Activated T-helper 2 cell treated with anti-CD3 and anti-CD28 coated beads, Interferon-gamma antibody, Interleukin-2, Interleukin-4, amounts not matched to agents 10 μg/mL and 5 μg/mL and 100 μg/mL, durations not matched to agents 14 hours and 24 hours and 36 hours (primary cell): ENCODE measurements at regions of chr15 and their contacts with region 1.

Region 1: GRCh38 chr15:84658080-84658787 is at the start of gene NMB:
- DNase-seq: peak; percentile 75
- H3K4me3 Mint-ChIP-seq: peak within 1 kb of the TSS; percentile 75
- H3K27ac Mint-ChIP-seq: peak within 1 kb of the TSS; percentile 73
- H3K4me1 Mint-ChIP-seq: peaks cover 25% of the 10 kb centered on the region
- H3K27me3 Mint-ChIP-seq: no peaks in the 10 kb centered on the region
- total RNA-seq, gene NMB: 2.5 and 3.0 TPM in 2 replicates

Region 2: DNA sequence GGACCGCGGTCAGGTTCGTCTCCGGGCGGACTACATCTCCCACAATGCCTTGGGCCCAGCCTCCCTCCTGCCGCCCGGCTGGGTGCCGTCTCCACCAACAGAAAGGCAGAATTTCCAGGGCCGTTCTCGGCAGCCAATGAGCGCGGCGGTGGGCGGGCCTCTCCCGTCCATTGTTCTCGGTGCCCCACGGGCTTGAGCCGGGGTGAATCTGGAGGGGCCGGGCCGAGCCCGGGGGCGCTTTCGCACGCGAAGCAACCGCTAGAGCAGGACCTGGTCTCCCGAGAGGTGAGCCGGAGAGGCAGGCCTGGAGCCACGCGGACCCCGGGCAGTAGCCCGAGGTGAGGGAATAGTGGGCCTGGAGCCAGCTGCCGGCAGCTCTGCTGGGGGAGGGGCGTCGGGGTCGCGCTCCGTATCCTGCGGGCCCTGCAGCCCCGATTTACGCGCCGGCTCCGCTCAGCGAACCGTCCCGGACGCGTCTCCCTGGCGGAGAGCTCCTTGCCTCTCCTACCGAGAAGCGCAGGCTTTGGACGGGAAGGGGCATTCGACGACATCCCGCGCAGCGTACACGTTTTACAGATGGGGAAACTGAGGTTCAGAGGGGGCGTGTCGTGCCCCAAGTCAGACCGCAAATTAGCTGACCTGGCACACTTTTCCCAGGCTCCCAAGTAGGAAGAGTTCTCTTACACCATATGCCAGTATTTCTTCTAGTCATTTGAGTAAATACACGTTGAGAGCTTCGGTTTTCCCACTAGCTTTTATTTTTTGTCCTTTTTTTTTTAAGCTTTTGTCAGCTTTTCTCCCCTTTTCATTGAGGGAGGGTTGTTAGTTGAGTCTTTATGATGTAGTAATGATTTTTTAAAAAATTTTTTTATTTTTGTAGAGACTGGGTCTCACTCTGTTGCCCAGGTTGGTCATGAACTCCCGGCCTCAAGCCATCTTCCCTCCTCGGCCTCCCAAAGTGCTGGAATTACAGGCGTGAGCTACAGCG is 57.1 kb before region 1 on chr15 and contains the start of gene ZSCAN2:
- intact Hi-C with region 1: loop called (anchors 1 kb)
- DNase-seq: peak; percentile 92
- H3K4me3 Mint-ChIP-seq: peak within 1 kb of the TSS; percentile 90
- H3K27ac Mint-ChIP-seq: peak within 1 kb of the TSS; percentile 73
- H3K4me1 Mint-ChIP-seq: peaks cover 48% of the 10 kb centered on the region
- H3K27me3 Mint-ChIP-seq: no peaks in the 10 kb centered on the region
- total RNA-seq, gene ZSCAN2: 10.1 and 10.6 TPM in 2 replicates

Region 3: DNA sequence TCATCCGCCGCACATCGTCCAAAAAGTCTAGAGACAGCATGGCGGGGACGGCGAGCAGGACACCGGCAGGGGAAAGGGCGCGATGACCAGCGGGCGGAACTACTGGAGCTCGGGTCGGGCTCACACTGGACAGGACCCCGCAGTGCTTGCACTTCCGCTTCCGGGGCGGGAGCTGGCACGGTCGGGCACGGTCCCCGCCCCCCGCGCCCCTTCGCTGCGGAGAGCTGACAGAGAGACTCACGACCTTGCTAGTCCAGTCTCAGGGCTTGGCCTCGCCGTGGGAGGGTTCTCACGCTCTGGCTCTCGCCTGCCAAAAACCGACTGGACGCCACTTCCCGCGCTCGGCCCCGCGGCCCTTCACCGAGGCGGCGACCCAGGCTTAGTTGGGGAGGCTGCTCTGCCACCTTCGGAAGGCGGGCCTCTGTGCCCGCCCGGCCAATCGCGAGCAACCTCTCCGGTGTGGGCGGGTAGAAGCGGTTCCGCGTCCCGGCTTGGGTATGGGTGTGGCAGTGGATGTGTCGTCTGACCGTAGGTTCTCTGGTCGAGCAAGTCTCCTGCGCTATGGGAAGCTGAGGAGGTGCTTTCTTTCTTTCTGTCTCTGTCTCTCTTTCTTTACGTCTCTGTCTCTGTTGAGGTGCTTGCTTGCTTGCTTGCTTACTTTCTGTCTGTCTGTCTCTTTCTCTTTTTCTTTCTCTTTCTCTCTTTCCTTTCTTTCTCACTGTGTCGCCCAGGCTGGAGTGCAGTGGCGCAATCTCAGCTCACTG is 58.0 kb after region 1 on chr15 and contains the start of gene SEC11A:
- intact Hi-C with region 1: loop called (anchors 1 kb)
- DNase-seq: peak; percentile 89
- H3K4me3 Mint-ChIP-seq: peak within 1 kb of the TSS; percentile 92
- H3K27ac Mint-ChIP-seq: peak within 1 kb of the TSS; percentile 89
- H3K4me1 Mint-ChIP-seq: peaks cover 32% of the 10 kb centered on the region
- H3K27me3 Mint-ChIP-seq: no peaks in the 10 kb centered on the region
- total RNA-seq, gene SEC11A: 115 and 117 TPM in 2 replicates

Region 4: GRCh38 chr15:84748274-84749110 is 90.3 kb after region 1 on chr15 and contains the start of gene ZNF592:
- intact Hi-C with region 1: loop called (anchors 1 kb)
- DNase-seq: peak; percentile 76
- H3K4me3 Mint-ChIP-seq: peak within 1 kb of the TSS; percentile 94
- H3K27ac Mint-ChIP-seq: peak within 1 kb of the TSS; percentile 97
- H3K4me1 Mint-ChIP-seq: peaks cover 47% of the 10 kb centered on the region
- H3K27me3 Mint-ChIP-seq: no peaks in the 10 kb centered on the region
- total RNA-seq, gene ZNF592: 29.3 and 31.3 TPM in 2 replicates

Region 5: DNA sequence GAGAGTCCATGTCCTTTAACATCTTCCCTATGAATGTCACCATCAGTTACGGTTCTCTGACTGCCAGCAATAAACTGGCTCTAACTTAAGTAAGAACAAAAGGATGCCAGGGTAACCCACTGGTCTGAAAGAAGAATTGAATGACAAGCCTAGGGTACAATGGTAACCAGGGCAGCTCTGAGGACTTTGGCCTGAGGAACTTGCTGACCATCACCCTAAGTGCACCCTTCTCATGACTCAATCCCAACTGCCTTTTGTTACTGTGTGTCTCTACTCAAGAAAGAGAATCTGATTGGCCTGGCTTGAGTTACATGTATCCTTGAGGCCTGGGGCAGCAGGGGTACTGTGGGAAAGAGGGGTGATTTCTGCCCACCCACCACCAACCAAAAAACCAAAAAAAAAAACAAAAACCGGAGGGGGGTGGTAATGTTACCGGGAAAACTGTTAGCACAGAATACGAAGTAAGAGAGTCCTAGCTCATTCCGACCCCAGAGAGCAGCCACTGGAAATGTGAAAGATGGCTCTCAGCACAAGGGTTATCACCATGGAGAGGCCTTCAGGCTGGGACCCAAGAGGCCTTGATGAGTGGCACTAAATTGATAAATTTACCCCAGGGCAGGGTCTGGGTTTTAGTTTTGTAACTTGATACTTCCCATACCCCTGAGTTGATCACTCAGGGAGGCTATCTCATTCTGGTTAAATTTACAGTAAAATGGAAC is 216.9 kb after region 1 on chr15:
- intact Hi-C with region 1: loop called (anchors 5 kb)
- DNase-seq: no peak
- H3K4me3 Mint-ChIP-seq: no peak overlapping the region
- H3K27ac Mint-ChIP-seq: no peak overlapping the region
- H3K4me1 Mint-ChIP-seq: peaks cover 4% of the 10 kb centered on the region
- H3K27me3 Mint-ChIP-seq: peaks cover under 1% of the 10 kb centered on the region